ENCODE measurements at regions of chr14 and their contacts with region 1.

Region 1: DNA sequence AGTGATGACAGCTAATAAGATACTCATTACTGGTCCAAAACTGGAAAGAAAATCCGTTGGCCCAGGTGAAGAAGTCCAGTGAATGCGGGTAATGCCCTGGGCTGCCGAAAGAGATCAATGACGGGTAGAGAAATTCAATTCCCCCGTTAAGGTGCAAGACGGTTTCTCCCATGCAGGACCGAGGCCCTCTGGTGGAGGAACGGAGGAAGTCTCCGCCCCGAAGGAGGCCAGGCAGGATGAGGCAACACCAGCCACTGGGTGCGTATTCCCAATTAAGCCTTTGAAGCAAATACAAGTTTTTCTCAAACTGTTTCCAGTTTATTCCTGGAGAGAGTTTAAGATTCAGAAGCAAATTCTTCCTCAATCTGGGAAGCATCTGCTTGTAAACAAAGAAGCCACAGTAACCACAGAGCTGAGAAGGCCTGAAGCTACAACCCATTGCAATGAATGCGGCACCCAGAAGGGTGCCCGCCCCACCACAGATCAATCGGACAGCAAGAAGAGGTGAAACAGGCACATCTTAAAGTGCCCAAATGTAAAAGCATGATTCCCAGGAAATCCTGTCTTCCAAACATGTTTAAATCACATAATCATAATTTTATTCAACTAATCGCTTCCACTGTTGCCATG is 118.5 kb downstream of the TTC7B start:
- DNase-seq: peak; percentile 82
- H3K4me3 ChIP-seq: no peak overlapping the region
- H3K27ac ChIP-seq: peak overlapping the region; percentile 67 to 72
- H3K4me1 ChIP-seq: peaks cover 17% of the 10 kb centered on the region
- H3K27me3 ChIP-seq: no peaks in the 10 kb centered on the region
- CTCF ChIP-seq: peak; percentile 82 to 96 (median 90)
- POLR2A ChIP-seq: no peak

Region 2: DNA sequence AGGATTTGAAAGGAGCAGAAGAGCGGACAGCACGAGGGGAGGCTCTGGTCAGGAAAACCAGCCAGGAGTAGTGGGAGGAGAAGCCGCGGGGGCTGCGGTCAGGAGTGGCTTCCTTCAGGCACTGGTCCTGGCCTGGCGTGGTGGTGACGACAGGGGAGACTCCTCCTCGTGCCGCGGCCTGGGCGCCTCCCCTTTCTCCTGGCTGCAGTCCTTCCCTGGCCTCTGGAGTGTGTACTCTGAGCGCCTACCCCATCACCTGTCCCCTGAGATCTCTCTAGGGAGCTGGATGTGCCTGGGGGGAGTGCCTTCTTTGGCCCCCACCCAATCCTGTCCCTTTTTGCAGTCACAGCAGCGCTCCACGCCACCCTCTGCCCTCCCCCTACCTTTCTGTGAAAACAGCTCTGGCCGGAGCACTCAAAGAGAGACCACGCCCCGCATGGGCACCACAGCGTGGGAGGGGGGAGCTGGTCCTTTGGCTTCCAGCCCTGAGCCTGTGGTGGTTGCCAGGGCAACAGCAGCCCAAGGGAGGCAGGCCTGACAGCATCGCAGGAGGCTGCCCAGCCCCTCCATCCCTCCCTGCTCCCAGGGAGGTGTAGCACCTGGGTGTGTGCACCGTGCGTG is 175.0 kb before region 1 on chr14:
- intact Hi-C with region 1: loop called (anchors 2 kb)
- DNase-seq: peak; percentile 75
- H3K4me3 ChIP-seq: no peak overlapping the region
- H3K27ac ChIP-seq: peak overlapping the region; percentile 53 to 65
- H3K4me1 ChIP-seq: peaks cover 22% of the 10 kb centered on the region
- H3K27me3 ChIP-seq: no peaks in the 10 kb centered on the region
- CTCF ChIP-seq: peak in 1 of 4 experiments; percentile 10
- POLR2A ChIP-seq: peak; percentile 35

Region 3: GRCh38 chr14:90611936-90612335 is 85.8 kb before region 1 on chr14:
- intact Hi-C with region 1: no loop called
- DNase-seq: no peak
- H3K4me3 ChIP-seq: no peak overlapping the region
- H3K27ac ChIP-seq: peak overlapping the region; percentile 0 to 13
- H3K4me1 ChIP-seq: peaks cover 5% of the 10 kb centered on the region
- H3K27me3 ChIP-seq: no peaks in the 10 kb centered on the region
- CTCF ChIP-seq: no peak
- POLR2A ChIP-seq: no peak

Region 4: GRCh38 chr14:90758028-90758889 is 60.6 kb after region 1 on chr14:
- intact Hi-C with region 1: loop called (anchors 5 kb)
- DNase-seq: peak; percentile 91
- H3K4me3 ChIP-seq: peak overlapping the region; percentile 35 to 42
- H3K27ac ChIP-seq: peak overlapping the region; percentile 85 to 87
- H3K4me1 ChIP-seq: peaks cover 8% of the 10 kb centered on the region
- H3K27me3 ChIP-seq: no peaks in the 10 kb centered on the region
- CTCF ChIP-seq: peak; percentile 93 to 98 (median 96)
- POLR2A ChIP-seq: peak; percentile 8

Measured in prostate gland (tissue), 2 donors.